GM10248 (cell line): ENCODE measurements at regions of chr1 and their contacts with region 1.

Region 1: DNA sequence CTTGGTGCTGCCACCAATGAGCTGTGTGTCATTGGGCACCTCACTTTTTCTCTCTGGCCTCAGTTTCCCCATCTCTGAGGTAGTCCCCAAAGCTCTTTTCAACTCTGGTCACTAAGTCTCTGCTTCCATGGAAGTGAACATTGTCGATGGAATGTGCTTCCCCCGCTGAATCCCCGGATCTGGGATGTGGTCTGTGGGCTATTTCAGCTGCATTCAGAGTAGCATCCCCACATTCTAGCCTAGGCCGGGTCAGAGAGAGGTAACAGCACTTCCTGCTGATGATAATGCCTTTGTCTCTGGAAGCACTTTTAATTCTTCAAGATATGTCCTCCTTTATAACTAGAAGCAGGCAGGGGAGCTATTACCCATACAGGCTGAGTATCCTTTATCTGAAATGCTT is 29.8 kb downstream of the RASSF5 start:
- DNase-seq: no peak
- CTCF ChIP-seq: no peak

Region 2: DNA sequence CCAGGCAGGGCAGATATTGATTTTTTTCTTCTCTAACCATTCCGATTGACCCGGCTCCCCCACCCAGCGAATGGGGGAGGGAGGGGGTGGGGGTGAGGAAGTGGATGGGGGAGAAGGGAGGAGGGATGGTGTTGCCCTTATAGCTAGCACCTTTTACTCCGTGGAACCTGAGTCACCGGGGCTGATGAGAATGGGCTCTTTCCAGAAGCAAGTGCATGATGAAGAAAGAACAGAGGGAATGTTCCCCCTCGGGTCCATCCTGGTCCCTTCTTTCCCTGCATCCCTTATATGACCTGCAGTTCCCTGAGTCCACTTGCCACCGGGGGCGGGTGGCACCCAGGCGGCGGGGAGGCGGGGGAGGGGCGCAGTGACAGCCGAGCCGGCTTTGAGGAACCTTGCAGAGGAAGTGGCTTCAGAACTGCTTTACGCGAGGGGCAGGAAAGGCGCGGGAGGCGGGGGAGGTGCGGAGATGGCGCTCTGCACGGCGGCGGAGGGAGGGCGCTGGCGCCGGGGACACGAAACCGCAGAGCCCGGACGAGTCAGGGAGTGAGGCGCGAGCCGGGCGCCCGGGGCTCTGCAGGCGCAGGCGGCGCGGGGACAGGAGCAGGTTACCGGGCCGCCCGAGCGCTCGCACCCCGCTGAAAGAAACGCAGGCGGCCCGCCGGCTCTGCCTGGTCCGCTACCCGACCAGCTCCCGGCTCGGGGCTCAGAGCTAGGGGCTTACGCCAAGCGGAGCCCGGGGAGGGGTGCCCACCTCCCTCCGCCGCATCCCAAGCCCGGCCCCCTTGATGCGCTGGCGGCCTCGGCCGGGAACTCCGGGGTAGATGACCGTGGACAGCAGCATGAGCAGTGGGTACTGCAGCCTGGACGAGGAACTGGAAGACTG is 19.9 kb after region 1 on chr1:
- CTCF ChIA-PET with region 1: interaction called, 290 read pairs
- POLR2A ChIA-PET with region 1: no interaction called
- DNase-seq: peak; percentile 80
- CTCF ChIP-seq: no peak